Cardiac septum (tissue), 1 donor: ENCODE measurements at regions of chr1 and their contacts with region 1.

Region 1: DNA sequence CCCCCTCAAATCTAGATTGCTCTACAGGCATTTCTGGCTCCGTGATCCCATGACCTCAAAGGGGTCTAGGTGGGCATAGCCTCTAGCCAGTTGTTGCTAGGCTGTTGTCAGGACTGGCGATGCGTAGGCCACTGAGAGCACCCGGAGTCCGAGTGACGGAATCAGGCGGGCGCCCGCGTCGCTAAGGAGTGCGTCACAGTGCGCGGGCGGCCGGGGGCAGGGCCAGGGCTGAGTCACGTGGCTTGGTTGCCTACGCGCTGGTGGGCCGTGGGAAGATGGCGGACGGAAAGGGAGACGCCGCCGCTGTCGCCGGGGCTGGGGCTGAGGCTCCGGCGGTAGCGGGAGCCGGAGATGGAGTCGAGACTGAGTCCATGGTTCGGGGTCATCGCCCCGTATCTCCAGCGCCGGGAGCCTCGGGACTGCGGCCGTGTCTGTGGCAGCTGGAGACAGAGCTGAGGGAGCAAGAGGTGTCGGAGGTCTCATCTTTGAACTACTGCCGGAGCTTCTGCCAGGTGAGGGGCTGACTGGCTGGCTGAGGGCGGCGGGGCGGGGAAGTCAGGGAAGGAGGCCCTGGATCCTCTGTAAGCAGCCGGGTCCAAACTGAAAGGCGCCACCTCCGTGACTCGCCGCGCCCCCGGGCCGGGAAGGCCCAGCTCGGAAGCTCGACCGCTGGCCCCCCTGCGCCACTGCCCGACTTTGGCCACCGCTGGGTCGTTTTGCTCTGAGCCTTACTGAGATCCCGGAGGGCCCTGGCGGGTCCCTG is at the start of gene RLF:
- DNase-seq: peak; percentile 98
- total RNA-seq, gene RLF: 13.8 TPM

Region 2: GRCh38 chr1:40257688-40258444 is 96.6 kb after region 1 on chr1 and contains the start of gene ZMPSTE24:
- intact Hi-C with region 1: loop called (anchors 1 kb)
- DNase-seq: peak; percentile 98
- total RNA-seq, gene ZMPSTE24: 24.8 TPM

Region 3: GRCh38 chr1:40315239-40315794 is 154.0 kb after region 1 on chr1:
- intact Hi-C with region 1: loop called (anchors 5 kb)
- DNase-seq: peak; percentile 93